ENCODE measurements at regions of chr4 and their contacts with region 1.

Region 1: DNA sequence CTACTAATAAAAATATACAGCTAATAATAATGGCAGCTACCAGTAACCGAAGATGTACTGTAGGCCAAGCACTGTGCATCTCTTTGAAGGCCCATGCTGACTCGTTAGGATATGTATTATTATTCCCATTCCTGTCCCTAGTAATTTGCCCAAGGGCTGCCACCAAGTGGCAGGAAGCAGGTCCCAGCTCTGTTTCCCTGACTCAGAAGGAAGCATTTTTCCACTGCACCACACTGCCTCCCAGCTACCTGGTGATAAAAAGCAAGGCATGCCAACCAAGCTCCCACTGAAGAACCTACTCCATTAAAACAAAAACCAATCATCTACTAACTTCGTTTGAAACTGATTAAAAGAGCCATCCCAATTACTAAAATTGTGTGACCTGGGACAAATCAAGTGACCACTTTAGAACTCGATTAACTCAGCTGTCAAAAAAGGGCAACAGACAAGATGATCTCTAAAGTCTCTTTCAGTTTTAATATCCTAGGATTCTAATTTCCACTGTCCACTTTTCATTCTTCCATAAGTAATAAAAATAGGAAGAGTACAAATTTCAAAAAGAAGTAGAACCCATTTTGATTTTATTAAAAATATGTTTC is 24.3 kb upstream of the PGM2 start:
- DNase-seq: peak; percentile 73
- H3K4me3 ChIP-seq: no peak overlapping the region
- H3K27ac ChIP-seq: no peak overlapping the region
- H3K4me1 ChIP-seq: no peaks in the 10 kb centered on the region
- H3K27me3 ChIP-seq: peaks cover 0 to 3% of the 10 kb centered on the region in 2 experiments
- CTCF ChIP-seq: peak; percentile 42 to 51
- POLR2A ChIP-seq: no peak

Region 2: DNA sequence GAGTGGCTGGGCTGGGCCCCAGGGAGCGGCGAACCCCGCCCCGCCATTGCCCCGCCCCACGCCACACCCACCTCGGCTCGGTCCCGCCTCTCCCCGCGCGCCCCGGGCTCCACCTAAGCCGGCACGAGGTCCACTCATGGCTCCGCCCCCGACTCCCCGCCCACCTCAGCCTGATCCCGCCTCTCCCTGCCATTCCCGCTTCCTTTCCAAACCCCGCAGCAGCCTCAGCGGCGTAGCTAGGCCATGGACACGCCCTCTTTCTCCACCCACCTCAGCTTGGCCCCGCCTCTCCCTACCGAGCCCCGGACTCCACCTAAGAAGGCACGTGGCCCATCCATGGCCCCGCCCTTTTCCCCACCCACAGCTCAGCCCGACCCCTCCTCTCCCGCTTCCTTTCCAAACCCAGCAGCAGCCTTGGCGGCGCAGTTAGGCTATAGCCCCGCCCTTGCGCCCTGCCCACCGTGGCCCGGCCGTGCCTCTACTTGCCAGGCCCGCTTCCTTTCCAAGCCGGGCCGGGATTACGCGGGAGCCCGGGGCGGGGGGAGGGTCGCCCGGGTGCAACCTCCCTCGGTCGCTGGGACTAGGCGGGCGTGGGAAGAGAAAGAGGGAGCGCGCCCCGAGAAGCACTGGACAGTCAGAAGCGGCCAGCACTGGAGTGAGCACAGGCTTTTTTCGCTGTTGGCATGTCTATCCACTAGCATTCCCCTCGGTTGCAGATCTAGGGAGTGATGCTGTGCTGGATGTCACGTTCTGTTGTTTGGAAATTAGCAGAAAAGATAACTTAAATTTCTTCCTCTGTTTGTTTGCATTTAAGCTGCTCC is 115.6 kb before region 1 on chr4 and contains the start of gene RELL1:
- CTCF ChIA-PET with region 1: interaction called, 4 read pairs
- POLR2A ChIA-PET with region 1: no interaction called
- dilution Hi-C with region 1: no loop called
- intact Hi-C with region 1: loop called (anchors 1 kb)
- DNase-seq: peak; percentile 100
- H3K4me3 ChIP-seq: peak within 1 kb of the TSS; percentile 68 to 95 (median 86)
- H3K27ac ChIP-seq: peak within 1 kb of the TSS; percentile 79
- H3K4me1 ChIP-seq: peaks cover 24% of the 10 kb centered on the region
- H3K27me3 ChIP-seq: no peaks in the 10 kb centered on the region
- CTCF ChIP-seq: no peak
- POLR2A ChIP-seq: no peak
- total RNA-seq, gene RELL1: 87.1 and 91.7 TPM in 2 replicates

Region 3: DNA sequence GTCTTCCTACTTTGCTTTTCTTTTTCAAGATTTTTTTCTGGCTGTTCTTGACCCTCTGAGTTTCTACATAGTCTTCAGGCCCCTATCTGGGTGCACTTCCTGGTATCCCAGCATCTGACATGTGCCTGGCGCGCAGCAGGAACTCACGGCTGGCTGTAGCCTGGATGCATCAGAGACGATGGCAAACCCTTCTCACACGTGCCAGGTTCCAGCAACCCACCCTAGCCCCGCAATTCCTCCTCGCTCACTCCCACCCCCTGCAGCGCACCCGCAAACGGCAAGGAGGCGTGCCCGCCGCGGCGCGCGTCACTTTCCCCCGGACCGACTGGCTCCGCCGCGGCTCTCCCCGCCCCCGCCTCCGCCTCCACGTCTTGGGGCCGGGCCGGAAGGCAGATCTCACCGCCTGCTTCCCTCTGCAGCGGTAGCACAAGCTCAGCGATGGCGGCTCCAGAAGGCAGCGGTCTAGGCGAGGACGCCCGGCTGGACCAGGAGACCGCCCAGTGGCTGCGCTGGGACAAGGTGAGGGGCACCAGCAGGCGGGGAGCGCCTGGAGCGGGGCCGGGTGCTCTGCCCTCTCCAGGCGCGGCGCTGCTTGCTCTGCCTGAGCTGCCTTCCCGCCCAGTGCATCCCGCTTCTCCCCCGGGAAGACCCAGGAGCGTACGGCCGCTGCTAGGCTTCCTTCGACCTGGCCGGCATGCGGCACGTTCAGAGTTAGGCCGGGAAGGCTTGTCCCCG is 24.3 kb after region 1 on chr4 and contains the start of gene PGM2:
- CTCF ChIA-PET with region 1: interaction called, 19 read pairs
- POLR2A ChIA-PET with region 1: interaction called, 3 read pairs
- dilution Hi-C with region 1: no loop called
- intact Hi-C with region 1: loop called (anchors 2 kb)
- DNase-seq: peak; percentile 91
- H3K4me3 ChIP-seq: peak within 1 kb of the TSS; percentile 45 to 96 (median 95)
- H3K27ac ChIP-seq: peak within 1 kb of the TSS; percentile 56
- H3K4me1 ChIP-seq: peaks cover 19% of the 10 kb centered on the region
- H3K27me3 ChIP-seq: no peaks in the 10 kb centered on the region
- CTCF ChIP-seq: peak in 1 of 2 donors; percentile 16
- POLR2A ChIP-seq: peak; percentile 87
- total RNA-seq, gene PGM2: 45.8 and 53.9 TPM in 2 replicates

Region 4: DNA sequence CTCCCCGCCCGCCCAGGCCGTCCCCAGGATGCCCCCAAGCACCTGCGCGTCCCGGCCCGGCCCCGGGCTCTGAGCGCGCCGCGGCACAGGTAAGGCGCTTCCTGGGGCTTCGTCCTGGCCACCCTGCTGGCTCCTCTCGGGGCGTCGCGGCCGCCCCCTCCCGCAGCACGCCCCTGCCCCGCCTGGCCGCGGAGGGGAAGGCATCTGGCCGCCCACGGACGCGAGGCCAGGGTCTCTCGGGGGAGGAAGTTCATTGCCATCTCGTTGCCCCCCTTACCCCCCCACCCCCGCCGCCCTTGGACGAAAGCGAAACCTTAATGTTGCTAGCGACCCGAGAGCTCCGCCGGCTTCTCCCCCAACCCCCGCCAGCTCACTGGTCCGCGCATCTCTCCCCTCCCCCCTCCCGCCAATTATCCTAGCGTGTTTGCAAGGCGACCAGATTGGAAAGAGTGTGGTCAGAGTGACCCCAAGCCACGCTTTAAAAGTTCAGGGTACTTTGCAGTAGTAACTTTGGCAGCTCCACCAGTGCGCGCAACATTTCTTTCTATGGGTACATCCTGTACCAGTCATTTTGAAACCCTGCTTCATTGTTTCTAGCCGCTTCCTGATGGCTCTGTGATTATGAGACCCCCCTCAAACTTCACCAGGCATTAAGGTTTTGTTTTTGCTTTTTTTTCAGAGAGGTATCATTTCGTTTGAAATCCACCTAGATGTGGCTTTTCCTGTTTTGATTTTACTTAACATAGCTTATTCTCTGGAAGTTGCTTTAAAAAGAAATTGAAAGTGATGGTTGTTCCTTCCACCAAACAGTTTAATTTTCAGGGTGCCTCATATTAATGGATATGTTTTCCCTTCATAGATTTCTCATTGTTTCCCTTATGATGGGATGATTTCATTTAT is 89.3 kb after region 1 on chr4:
- CTCF ChIA-PET with region 1: interaction called, 4 read pairs
- POLR2A ChIA-PET with region 1: no interaction called
- dilution Hi-C with region 1: no loop called
- intact Hi-C with region 1: loop called (anchors 5 kb)
- DNase-seq: peak; percentile 17
- H3K4me3 ChIP-seq: peak overlapping the region; percentile 44 to 64 (median 48)
- H3K27ac ChIP-seq: no peak overlapping the region
- H3K4me1 ChIP-seq: peaks cover 7% of the 10 kb centered on the region
- H3K27me3 ChIP-seq: peaks cover 30 to 35% of the 10 kb centered on the region in 2 experiments
- CTCF ChIP-seq: peak in 1 of 2 donors; percentile 15
- POLR2A ChIP-seq: no peak

Region 5: GRCh38 chr4:37977471-37978247 is 175.5 kb after region 1 on chr4:
- CTCF ChIA-PET with region 1: interaction called, 9 read pairs
- POLR2A ChIA-PET with region 1: no interaction called
- dilution Hi-C with region 1: no loop called
- intact Hi-C with region 1: loop called (anchors 1 kb)
- DNase-seq: peak; percentile 69
- H3K4me3 ChIP-seq: peak overlapping the region; percentile 21 to 77 (median 74)
- H3K27ac ChIP-seq: peak overlapping the region; percentile 83
- H3K4me1 ChIP-seq: peaks cover 13% of the 10 kb centered on the region
- H3K27me3 ChIP-seq: no peaks in the 10 kb centered on the region
- CTCF ChIP-seq: peak; percentile 52 to 82
- POLR2A ChIP-seq: no peak

Region 6: DNA sequence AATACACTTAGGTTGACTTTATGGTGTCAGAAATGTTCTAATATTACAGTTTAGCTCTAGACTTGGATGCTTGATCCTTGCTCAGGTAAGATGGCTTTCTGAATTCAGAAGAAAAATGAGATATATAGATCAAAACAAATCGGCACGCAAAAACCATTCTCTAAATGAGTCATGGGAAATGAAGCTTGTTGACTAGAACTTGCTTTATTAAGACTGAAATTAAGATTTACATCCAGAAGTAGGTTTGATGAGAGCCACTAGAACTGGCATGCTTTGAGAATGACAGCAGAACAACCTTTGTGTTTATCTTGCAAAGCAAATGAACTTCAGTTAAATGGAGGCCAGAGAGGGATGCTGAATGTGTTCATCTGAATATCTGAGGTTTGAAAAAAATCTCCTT is 556.9 kb after region 1 on chr4:
- CTCF ChIA-PET with region 1: no interaction called
- POLR2A ChIA-PET with region 1: no interaction called
- dilution Hi-C with region 1: no loop called
- intact Hi-C with region 1: no loop called
- DNase-seq: no peak
- H3K4me3 ChIP-seq: no peak overlapping the region
- H3K27ac ChIP-seq: no peak overlapping the region
- H3K4me1 ChIP-seq: no peaks in the 10 kb centered on the region
- H3K27me3 ChIP-seq: peaks cover 0 to 2% of the 10 kb centered on the region in 2 experiments
- CTCF ChIP-seq: no peak
- POLR2A ChIP-seq: no peak

Measured in endothelial cell of umbilical vein (primary cell).